A673 (cell line): ENCODE measurements at regions of chr2 and their contacts with region 1.

Region 1: GRCh38 chr2:39476524-39476923 is 39.4 kb upstream of the MAP4K3 start:
- DNase-seq: no peak
- H3K4me3 ChIP-seq: no peak overlapping the region
- H3K27ac ChIP-seq: no peak overlapping the region
- H3K4me1 ChIP-seq: peaks cover 8% of the 10 kb centered on the region
- H3K27me3 ChIP-seq: no peaks in the 10 kb centered on the region
- CTCF ChIP-seq: no peak

Region 2: GRCh38 chr2:39403311-39403710 is 73.2 kb before region 1 on chr2:
- CTCF ChIA-PET with region 1: no interaction called
- POLR2A ChIA-PET with region 1: interaction called, 11 read pairs
- intact Hi-C with region 1: no loop called
- DNase-seq: no peak
- H3K4me3 ChIP-seq: no peak overlapping the region
- H3K27ac ChIP-seq: no peak overlapping the region
- H3K4me1 ChIP-seq: peaks cover 32% of the 10 kb centered on the region
- H3K27me3 ChIP-seq: no peaks in the 10 kb centered on the region
- CTCF ChIP-seq: no peak

Region 3: GRCh38 chr2:39492095-39492590 is 15.6 kb after region 1 on chr2:
- CTCF ChIA-PET with region 1: no interaction called
- POLR2A ChIA-PET with region 1: interaction called, 27 read pairs
- intact Hi-C with region 1: no loop called
- DNase-seq: peak; percentile 32
- H3K4me3 ChIP-seq: no peak overlapping the region
- H3K27ac ChIP-seq: no peak overlapping the region
- H3K4me1 ChIP-seq: peaks cover 11% of the 10 kb centered on the region
- H3K27me3 ChIP-seq: no peaks in the 10 kb centered on the region
- CTCF ChIP-seq: no peak

Region 4: DNA sequence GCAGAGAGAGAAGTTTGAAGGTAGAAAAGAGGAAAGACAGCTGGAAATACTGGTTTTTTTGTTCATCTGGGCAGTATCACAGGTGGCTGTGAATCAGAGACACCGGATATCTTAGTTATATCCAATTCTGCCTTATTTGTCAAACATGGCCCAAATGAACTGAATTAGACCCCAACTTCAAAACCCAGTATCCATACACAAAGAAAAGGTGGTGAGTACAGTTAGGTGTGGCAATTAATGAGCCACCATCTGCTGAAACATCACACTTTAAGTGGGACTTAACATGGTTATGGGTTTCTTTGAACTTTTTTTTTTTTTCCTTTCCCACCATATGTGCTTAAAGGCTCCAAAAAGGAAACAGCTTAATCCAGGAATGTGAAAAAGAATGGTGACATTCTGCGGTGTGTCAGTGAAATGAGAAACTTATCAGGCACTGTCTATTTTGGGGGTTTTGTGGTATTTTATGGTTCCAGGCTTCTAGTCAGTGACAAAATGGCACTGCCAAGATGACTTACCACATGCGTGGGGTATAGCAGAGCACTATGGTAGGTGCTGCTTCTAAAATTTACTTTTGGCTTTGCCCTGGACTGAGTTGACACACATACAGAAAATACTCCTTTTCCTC is 184.2 kb after region 1 on chr2:
- CTCF ChIA-PET with region 1: no interaction called
- POLR2A ChIA-PET with region 1: no interaction called
- intact Hi-C with region 1: no loop called
- DNase-seq: no peak
- H3K4me3 ChIP-seq: no peak overlapping the region
- H3K27ac ChIP-seq: no peak overlapping the region
- H3K4me1 ChIP-seq: no peaks in the 10 kb centered on the region
- H3K27me3 ChIP-seq: peaks cover 25% of the 10 kb centered on the region
- CTCF ChIP-seq: no peak